A549 (cell line): ENCODE measurements at regions of chr11 and their contacts with region 1.

Region 1: GRCh38 chr11:102733232-102733875 is 8.6 kb upstream of the MMP8 start:
- DNase-seq: peak; percentile 38 to 64
- ATAC-seq: peak; percentile 91 to 98
- H3K4me3 ChIP-seq: no peak overlapping the region
- H3K27ac ChIP-seq: no peak overlapping the region
- H3K4me1 ChIP-seq: no peaks in the 10 kb centered on the region
- CTCF ChIP-seq: peak; percentile 75
- EP300 ChIP-seq: no peak
- POLR2A ChIP-seq: no peak
- RAD21 ChIP-seq: peak; percentile 83 to 84

Region 2: GRCh38 chr11:102802341-102802740 is 69.0 kb after region 1 on chr11:
- CTCF ChIA-PET with region 1: interaction called, 10 read pairs
- POLR2A ChIA-PET with region 1: no interaction called
- DNase-seq: no peak
- ATAC-seq: no peak
- H3K4me3 ChIP-seq: no peak overlapping the region
- H3K27ac ChIP-seq: no peak overlapping the region
- H3K4me1 ChIP-seq: no peaks in the 10 kb centered on the region
- CTCF ChIP-seq: no peak
- EP300 ChIP-seq: no peak
- POLR2A ChIP-seq: no peak
- RAD21 ChIP-seq: no peak

Region 3: GRCh38 chr11:102955624-102956023 is 222.3 kb after region 1 on chr11 and contains the start of gene MMP13:
- CTCF ChIA-PET with region 1: no interaction called
- POLR2A ChIA-PET with region 1: no interaction called
- DNase-seq: no peak
- ATAC-seq: no peak
- H3K4me3 ChIP-seq: no peak within 1 kb of the TSS
- H3K27ac ChIP-seq: no peak within 1 kb of the TSS
- H3K4me1 ChIP-seq: peaks cover 3% of the 10 kb centered on the region; the same call in 2 of the 3 replicates
- CTCF ChIP-seq: no peak
- EP300 ChIP-seq: no peak
- POLR2A ChIP-seq: no peak
- RAD21 ChIP-seq: no peak
- polyA plus RNA-seq, gene MMP13: 0.04 TPM in 1 of 2 replicates, not detected in the other